Head of caudate nucleus (tissue), 42 donors: ENCODE measurements at regions of chr1 and their contacts with region 1.

Region 1: GRCh38 chr1:181088079-181089016 is at the start of gene IER5:
- DNase-seq: peak; percentile 92 to 98 (median 96)

Region 2: DNA sequence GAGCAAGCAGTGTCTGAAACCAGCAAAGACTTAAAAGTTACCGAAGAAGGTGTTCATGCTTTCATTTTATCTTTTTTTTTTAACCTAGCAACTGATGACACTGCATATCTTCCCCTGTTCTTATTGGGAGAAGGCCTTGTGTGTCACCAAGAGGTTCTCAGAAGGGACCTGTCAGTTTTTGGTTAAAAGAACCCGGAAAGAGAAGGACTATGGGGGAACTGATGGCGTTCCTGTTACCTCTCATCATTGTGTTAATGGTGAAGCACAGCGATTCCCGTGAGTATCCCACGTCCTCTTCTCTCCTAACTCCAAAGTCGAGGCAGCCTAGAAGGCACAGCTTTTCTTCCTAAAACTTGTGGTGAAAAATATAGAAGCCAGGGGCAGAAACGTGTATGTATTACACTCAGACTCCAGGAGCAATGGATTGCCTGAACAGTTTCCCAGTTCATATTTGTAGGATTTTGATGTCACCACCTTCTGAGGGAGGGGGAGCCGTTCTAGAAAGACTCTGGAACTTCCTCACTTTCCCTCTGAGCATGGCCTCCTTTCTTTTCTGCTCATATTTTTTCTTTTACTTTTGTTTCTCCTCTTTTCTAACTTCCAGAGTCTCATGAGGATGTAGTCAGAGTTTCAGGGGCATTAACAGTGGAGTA is 54.4 kb before region 1 on chr1 and contains the start of gene MR1:
- intact Hi-C with region 1: loop called (anchors 10 kb)
- DNase-seq: peak in 18 of 42 donors; percentile 14 to 64 (median 42)

Region 3: DNA sequence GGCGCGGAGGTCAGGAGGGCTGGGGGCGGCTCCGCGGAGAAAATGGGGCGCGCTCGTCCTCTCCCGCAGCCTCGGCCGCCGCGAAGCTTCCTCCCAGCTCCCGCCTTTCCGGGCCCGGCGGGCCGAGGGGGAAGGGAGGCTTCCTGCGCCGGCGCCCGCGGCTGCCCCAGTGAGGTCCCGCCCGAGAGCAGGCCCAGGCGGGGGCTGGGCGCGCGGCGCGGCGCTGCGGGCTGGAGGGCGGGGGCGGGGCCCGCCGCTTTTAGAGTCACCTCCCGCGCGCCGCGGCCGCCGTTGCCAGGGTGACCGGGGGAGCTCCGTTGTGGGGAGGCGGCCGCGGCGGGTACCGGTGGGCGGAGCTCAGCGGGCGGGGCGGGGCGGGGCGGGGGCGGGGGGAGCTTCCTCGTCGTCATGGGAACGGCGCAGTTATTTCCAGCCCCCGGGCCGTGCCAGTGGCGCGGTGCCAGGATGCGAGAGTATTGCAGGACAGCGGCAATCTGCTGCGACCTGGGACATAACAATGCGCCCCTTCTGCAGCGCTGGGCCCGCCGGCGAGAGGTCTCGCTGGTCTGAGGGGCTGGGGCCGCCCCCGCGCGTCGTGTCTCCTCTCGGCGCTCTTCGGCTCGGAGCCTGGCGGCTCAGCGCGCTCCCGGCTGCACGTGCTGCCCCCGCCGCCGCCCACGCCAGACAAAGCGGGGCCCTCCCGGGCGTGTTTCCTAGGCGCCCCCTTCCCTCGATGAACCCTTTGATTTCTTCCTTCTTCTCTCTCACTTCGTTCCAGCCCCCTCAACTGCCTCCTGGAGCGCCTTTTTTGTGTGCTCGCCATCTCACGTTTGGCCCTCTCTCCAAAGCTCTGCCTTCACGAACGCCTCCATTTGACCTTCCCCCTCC is 17.0 kb after region 1 on chr1:
- intact Hi-C with region 1: loop called (anchors 2 kb)
- DNase-seq: peak; percentile 77 to 97 (median 94)